ENCODE measurements at regions of chr1 and their contacts with region 1.

Region 1: DNA sequence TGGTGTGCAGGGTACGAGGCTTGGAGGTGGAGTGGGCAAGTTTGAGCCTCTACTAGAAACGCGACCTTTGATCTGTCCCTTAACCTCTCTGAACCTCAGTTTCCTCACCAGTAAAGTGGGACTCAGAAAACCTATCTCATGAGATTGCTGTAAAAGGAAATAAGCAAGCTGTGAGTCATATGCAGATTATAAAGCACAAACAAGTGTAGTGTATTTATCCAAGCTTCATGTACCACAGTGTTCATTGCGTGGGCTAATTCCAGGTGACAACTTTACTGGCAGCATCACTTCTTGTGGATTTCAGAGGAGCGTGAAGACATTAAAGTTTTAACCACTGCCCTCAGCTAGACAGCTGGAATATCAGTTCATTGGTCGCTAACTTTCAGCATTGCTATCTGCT is 44.4 kb downstream of the ZNF697 start:
- DNase-seq: no peak
- ATAC-seq: no peak
- H3K4me3 Mint-ChIP-seq: no peak overlapping the region
- H3K27ac Mint-ChIP-seq: no peak overlapping the region
- H3K4me1 Mint-ChIP-seq: no peaks in the 10 kb centered on the region
- H3K27me3 Mint-ChIP-seq: peaks cover 10% of the 10 kb centered on the region

Region 2: DNA sequence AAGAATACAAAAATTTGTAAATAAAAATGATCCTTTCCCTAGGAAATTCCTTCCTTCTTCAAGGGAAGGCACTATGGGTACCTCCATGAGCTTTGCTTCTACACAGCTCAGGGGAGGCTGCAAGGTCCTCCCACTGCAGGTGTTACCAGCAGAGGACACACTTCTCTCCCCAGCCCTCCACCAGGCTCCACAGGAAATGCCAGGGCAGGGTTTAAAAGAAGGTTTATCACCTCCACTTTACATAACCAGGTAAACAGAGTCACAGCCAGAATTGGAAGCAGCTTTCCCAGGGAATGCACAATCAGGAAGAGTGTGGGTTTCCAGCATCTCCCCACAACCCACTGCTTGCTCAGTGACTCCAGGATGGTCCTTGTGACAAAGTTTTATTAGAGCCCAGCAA is 90.8 kb before region 1 on chr1:
- CTCF ChIA-PET with region 1: no interaction called
- POLR2A ChIA-PET with region 1: no interaction called
- intact Hi-C with region 1: no loop called
- DNase-seq: no peak
- ATAC-seq: no peak
- H3K4me3 Mint-ChIP-seq: no peak overlapping the region
- H3K27ac Mint-ChIP-seq: no peak overlapping the region
- H3K4me1 Mint-ChIP-seq: no peaks in the 10 kb centered on the region
- H3K27me3 Mint-ChIP-seq: peaks cover 3% of the 10 kb centered on the region

Region 3: DNA sequence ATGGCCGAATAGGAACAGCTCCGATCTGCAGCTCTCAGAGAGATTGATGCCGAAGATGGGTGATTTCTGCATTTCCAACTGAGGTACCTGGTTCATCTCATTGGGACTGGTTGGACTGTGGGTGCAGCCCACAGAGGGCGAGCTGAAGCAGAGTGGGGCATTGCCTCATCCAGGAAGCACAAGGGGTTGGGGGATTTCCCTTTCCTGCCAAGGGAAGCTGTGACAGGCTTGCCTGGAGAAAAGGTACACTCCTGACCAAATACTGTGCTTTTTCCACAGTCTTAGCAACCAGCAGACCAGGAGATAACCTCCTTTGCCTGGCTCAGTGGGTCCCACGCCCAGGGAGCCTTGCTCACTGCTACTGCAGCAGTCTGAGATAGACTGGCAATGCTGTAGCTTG is 29.8 kb before region 1 on chr1:
- CTCF ChIA-PET with region 1: no interaction called
- POLR2A ChIA-PET with region 1: no interaction called
- intact Hi-C with region 1: loop called in 1 of 2 experiments (anchors 5 kb)
- DNase-seq: no peak
- ATAC-seq: no peak
- H3K4me3 Mint-ChIP-seq: no peak overlapping the region
- H3K27ac Mint-ChIP-seq: no peak overlapping the region
- H3K4me1 Mint-ChIP-seq: no peaks in the 10 kb centered on the region
- H3K27me3 Mint-ChIP-seq: peaks cover 3% of the 10 kb centered on the region

Region 4: GRCh38 chr1:119752592-119752991 is 148.9 kb after region 1 on chr1:
- CTCF ChIA-PET with region 1: no interaction called
- POLR2A ChIA-PET with region 1: no interaction called
- intact Hi-C with region 1: loop called in 1 of 2 experiments (anchors 5 kb)
- DNase-seq: no peak
- ATAC-seq: no peak
- H3K4me3 Mint-ChIP-seq: no peak overlapping the region
- H3K27ac Mint-ChIP-seq: no peak overlapping the region
- H3K4me1 Mint-ChIP-seq: no peaks in the 10 kb centered on the region
- H3K27me3 Mint-ChIP-seq: peaks cover 5% of the 10 kb centered on the region

Region 5: GRCh38 chr1:119779869-119780356 is 176.2 kb after region 1 on chr1:
- CTCF ChIA-PET with region 1: no interaction called
- POLR2A ChIA-PET with region 1: no interaction called
- intact Hi-C with region 1: no loop called
- DNase-seq: no peak
- ATAC-seq: no peak
- H3K4me3 Mint-ChIP-seq: no peak overlapping the region
- H3K27ac Mint-ChIP-seq: no peak overlapping the region
- H3K4me1 Mint-ChIP-seq: no peaks in the 10 kb centered on the region
- H3K27me3 Mint-ChIP-seq: peaks cover 7% of the 10 kb centered on the region

Measured in activated CD4-positive, alpha-beta T cell treated with anti-CD3 and anti-CD28 coated beads for 36 hours (primary cell).